HCT116 (cell line): ENCODE measurements at regions of chr3 and their contacts with region 1.

Region 1: DNA sequence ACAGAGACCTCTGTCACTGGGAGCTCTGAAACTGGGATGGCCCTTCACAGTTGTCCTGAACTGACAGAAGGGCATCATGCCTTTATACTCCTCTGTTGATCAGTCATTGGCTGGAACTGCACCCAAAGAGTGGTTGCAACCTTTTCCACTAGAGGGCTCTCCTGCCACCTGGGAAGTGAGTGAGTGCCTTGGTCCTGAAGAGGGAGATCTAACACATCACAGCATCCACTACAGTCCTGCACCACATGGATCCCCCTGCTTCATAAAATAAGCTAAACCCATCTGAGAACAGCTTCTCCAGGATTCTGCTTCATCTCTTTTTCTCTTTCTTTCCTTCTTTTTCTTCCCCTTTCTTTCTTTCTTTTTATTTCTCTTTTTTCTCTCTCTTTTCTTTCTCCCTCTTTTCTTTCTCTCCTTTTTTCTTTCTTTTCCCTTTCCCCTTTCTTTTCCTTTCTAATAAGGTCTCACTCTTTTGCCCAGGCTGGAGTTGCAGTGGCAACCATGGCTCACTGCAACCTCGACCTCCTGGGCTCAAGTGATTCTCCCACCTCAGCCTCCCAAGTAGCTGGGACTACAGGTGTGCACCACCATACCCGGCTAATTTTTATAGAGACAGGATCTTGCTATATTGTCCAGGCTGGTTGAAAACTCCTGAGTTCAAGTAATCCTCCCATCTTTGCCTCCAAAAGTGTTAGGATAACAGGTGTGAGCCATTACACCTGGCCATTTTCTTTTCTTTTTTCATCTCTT is 42.8 kb upstream of the RAF1 start:
- DNase-seq: peak; percentile 78
- ATAC-seq: peak; percentile 99
- H3K4me3 ChIP-seq: no peak overlapping the region
- H3K27ac ChIP-seq: no peak overlapping the region
- H3K4me1 ChIP-seq: peaks cover 0 to 10% of the 10 kb centered on the region in 2 experiments; a peak in 3 of 4 replicates
- H3K27me3 ChIP-seq: no peaks in the 10 kb centered on the region
- CTCF ChIP-seq: peak; percentile 91 to 99 (median 94)
- POLR2A ChIP-seq: no peak
- RAD21 ChIP-seq: peak; percentile 93

Region 2: GRCh38 chr3:12810013-12810780 is 103.5 kb after region 1 on chr3:
- CTCF ChIA-PET with region 1: interaction called, 13 read pairs
- POLR2A ChIA-PET with region 1: no interaction called
- RAD21 ChIA-PET with region 1: no interaction called
- intact Hi-C with region 1: loop called (anchors 2 kb)
- DNase-seq: peak; percentile 78
- ATAC-seq: peak; percentile 99
- H3K4me3 ChIP-seq: peak overlapping the region; percentile 44 to 57
- H3K27ac ChIP-seq: peak overlapping the region; percentile 32; the same call in 1 of the 2 replicates
- H3K4me1 ChIP-seq: peaks cover 9 to 16% of the 10 kb centered on the region in 2 experiments
- H3K27me3 ChIP-seq: no peaks in the 10 kb centered on the region
- CTCF ChIP-seq: peak in 2 of 3 experiments; percentile 74 to 81; a peak in 5 of 6 replicates
- POLR2A ChIP-seq: peak; percentile 52
- RAD21 ChIP-seq: peak; percentile 39; the same call in 1 of the 2 replicates

Region 3: DNA sequence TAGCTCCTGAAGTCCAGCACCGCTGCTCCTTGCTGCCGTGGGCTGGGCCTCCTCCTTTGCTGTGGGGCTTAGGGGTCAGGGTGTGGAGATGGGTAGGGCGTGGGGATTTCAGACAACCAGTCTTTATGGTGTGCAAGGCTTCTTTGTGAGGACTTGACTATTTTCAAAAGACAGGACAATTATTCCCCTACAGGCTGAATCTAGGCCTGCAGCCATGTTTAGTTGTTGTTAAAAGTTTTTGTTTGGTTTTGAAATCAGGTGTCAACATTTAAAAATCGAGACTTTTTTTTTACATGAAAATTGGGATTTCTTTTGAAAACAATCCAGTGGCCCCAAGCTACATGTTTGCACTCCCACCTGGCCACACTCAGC is 124.1 kb after region 1 on chr3:
- CTCF ChIA-PET with region 1: no interaction called
- POLR2A ChIA-PET with region 1: no interaction called
- RAD21 ChIA-PET with region 1: no interaction called
- intact Hi-C with region 1: loop called (anchors 5 kb)
- DNase-seq: no peak
- ATAC-seq: peak; percentile 28
- H3K4me3 ChIP-seq: no peak overlapping the region
- H3K27ac ChIP-seq: peak overlapping the region; percentile 25; the same call in 1 of the 2 replicates
- H3K4me1 ChIP-seq: peaks cover 0 to 20% of the 10 kb centered on the region in 2 experiments; a peak in 1 of 4 replicates
- H3K27me3 ChIP-seq: no peaks in the 10 kb centered on the region
- CTCF ChIP-seq: peak in 2 of 3 experiments; percentile 19 to 44; a peak in 3 of 6 replicates
- POLR2A ChIP-seq: no peak
- RAD21 ChIP-seq: no peak

Region 4: DNA sequence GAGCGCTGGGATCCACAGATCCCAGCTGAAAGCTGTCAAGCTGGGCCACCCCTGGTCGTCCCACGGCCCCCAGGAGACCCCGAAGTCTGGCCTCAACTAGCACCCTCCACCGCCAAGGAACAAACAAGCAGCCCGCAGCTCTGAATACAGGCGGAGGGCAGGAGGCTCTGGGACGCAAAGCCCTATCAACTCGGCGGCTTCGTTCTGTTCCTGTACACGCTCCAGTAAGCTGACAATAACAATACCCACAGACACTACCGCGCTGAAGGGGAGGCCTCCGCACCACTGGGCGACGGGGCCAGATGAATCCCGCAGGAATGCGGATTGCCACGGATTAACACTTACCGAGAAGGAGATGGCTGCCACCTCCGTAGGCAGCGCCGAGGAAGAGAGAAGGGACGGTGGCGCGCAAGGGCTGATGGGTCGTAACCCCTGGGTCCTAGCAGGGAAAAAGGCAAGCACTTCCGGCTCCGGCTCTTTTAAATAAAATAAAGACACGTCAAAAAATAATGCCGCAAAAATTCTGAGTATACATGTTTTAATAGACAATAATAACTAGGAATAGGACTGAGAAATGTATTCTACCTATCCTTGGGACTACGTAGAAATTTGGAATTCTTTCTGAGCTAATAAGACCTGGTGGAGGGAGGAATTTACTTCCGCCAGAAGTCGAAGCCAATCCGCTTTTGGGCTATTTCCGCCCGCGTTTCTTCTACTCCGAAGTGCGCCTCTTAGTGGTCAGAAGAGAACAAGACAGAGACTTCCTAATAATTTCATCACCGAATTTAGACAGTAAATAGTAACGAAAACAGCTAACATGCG is 134.7 kb after region 1 on chr3 and contains the start of gene RPL32:
- CTCF ChIA-PET with region 1: interaction called, 12 read pairs
- POLR2A ChIA-PET with region 1: interaction called, 5 read pairs
- RAD21 ChIA-PET with region 1: no interaction called
- intact Hi-C with region 1: no loop called
- DNase-seq: peak; percentile 94
- ATAC-seq: peak; percentile 82
- H3K4me3 ChIP-seq: peak within 1 kb of the TSS; percentile 95 to 100
- H3K27ac ChIP-seq: peak within 1 kb of the TSS; percentile 93
- H3K4me1 ChIP-seq: peaks cover 0 to 18% of the 10 kb centered on the region in 2 experiments; a peak in 2 of 4 replicates
- H3K27me3 ChIP-seq: no peaks in the 10 kb centered on the region
- CTCF ChIP-seq: peak; percentile 79 to 87 (median 80)
- POLR2A ChIP-seq: peak; percentile 95
- RAD21 ChIP-seq: peak; percentile 51; the same call in 1 of the 2 replicates
- total RNA-seq, gene RPL32: 1,853 TPM